Mucosa of descending colon (tissue), 3 donors: ENCODE measurements at regions of chr1 and their contacts with region 1.

Region 1: DNA sequence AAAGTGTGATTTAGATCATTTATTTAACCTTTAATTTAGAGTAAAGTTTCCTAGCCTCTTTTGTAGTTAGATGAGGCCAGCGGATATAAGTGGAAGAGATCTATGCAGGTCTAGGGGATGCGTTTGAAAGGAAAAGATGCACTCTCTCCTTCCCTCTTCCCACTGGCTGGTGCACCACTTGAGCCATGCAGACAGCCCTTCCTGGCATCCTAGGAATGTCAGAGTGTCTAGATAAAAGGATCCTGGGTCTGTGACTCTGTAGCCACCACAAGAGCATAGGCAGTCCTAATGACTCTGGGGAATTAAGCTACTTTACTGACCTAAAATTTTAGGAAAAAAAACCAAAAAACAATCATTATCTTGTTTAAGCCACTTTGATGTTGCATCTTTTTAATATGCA is 16.0 kb upstream of the STUM start:
- DNase-seq: no peak
- ATAC-seq: no peak
- H3K4me3 ChIP-seq: no peak overlapping the region
- H3K4me1 ChIP-seq: no peaks in the 10 kb centered on the region
- CTCF ChIP-seq: no peak

Region 2: DNA sequence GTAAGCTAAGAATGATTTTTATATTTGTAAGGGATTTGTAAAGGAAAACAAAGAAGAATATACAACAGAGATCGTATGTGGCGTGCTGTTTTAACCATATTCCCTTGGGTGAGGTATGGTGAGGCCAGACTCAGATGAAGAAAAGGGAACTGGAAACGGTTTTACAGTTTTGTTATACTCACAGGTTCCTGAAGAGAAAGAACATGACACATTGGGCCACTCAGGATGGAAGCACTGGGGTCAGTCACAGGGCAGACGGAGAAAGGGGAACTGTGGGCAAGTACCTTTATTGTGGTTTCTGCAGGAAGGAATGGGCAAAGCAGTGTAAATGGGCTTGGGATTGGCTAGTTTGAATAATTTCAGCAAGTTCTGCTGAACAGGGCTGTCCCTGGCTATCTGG is 1282.1 kb before region 1 on chr1:
- intact Hi-C with region 1: loop called in 1 of 2 experiments (anchors 10 kb)
- DNase-seq: no peak
- ATAC-seq: no peak
- H3K4me3 ChIP-seq: no peak overlapping the region
- H3K4me1 ChIP-seq: no peaks in the 10 kb centered on the region
- CTCF ChIP-seq: no peak

Region 3: GRCh38 chr1:226424228-226425003 is 108.1 kb before region 1 on chr1:
- intact Hi-C with region 1: loop called in 1 of 2 experiments (anchors 10 kb)
- DNase-seq: peak in 1 of 3 donors; percentile 19
- ATAC-seq: peak; percentile 70
- H3K4me3 ChIP-seq: no peak overlapping the region
- H3K4me1 ChIP-seq: no peaks in the 10 kb centered on the region
- CTCF ChIP-seq: no peak